HEK293T (cell line): ENCODE measurements at regions of chr10 and their contacts with region 1.

Region 1: GRCh38 chr10:123994417-123995081 is 98.8 kb downstream of the CHST15 start:
- DNase-seq: peak; percentile 97

Region 2: DNA sequence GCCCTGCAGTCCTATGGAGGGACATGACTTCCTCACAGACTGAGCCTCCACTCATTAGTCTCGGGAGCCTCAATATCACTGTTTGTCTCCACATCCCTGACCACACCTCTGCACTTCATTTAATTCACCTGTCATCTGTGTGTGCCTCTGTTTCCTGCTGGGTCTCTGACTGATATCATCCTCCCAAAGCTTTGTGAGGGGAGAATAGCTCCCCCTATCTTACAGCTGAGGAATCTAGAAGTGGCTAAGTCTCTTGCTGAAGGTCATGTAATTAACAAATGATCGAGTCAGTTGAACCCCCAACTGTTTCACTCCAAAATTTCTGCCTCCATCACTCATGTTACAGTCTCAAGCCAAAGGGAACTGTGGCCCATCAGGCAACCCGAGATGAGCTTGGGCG is 97.4 kb before region 1 on chr10:
- CTCF ChIA-PET with region 1: no interaction called
- POLR2A ChIA-PET with region 1: no interaction called
- DNase-seq: no peak

Region 3: DNA sequence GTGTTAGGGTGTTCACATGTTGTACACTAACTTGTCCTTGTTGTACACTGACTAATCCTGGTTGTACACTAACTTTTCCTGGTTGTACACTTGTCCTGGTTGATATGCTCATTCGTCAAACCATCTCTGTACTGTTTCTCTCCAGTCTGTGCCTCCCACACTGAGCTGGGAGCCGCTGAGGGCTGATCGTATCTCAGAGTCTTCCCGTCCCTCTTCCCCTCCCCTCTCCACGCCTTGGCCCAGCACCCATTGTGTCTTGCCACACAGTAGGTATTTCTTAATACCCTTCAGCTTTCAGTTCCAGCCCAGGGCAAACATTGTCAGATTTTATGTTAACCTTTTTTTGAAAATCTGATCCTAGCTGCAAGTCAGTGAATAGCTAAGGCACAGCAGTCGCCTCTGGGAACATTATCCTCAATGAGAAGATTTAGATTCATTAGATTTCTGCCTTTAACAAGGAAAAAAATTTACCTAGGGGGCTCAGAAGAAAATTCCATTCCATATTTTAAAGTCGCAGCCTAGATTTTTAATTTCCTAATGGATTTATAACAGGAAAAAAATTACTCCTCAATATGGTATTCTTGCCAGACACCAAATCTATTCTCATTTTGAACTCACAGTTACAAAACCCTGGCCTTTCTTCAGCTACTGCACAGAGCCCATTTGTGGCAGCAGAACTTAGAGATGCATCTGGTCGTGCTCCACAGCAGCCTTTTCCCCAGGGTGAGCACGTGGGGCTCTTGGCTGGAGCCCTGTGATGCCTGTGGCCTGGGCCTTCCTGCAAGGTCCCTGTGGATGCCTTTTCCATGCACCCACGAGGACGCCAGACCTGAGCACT is 131.8 kb after region 1 on chr10:
- CTCF ChIA-PET with region 1: no interaction called
- POLR2A ChIA-PET with region 1: no interaction called
- DNase-seq: no peak

Region 4: DNA sequence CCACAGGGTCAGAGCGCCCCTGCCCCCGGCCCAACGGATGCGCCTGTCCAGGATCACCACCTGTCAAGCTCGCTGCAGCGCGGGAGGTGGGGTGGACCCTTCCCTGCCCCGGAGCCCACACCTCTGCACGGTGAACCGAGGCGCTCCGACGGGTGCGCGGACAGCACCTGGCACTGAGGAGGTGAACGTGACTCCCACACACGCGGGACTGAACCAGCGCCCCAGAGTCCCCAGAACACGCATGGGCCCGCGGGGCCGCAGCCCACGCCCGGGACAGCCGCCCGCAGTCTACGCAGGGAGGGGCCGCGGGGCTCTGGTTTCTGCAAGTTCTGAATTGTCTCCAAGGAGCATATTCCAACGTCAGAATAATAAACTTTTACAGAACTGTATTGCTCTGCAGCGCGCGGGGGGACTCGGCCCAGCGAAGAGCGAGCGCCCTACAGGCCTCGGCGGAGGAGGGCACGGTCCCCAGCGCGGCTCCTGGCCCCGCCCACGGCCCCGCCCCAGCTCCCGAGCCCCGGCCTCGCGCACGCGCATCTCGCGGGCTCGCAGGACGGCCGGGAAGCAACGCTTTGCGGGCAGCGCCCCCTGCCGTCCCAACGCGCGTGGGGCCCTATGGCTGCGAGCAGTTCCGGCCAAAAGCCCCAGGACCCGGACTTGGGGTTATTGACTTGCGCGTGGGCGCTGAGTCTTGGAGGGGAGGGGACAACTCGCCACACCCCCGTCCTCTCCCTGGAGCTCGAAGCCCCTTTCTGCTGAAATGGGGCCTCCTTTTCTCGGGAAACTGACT is 394.5 kb after region 1 on chr10:
- CTCF ChIA-PET with region 1: interaction called, 59 read pairs
- POLR2A ChIA-PET with region 1: interaction called, 4 read pairs
- DNase-seq: peak; percentile 100

Region 5: GRCh38 chr10:124403548-124403947 is 409.0 kb after region 1 on chr10:
- CTCF ChIA-PET with region 1: interaction called, 14 read pairs
- POLR2A ChIA-PET with region 1: no interaction called
- DNase-seq: peak; percentile 78